ENCODE measurements at regions of chr1 and their contacts with region 1.

Region 1: DNA sequence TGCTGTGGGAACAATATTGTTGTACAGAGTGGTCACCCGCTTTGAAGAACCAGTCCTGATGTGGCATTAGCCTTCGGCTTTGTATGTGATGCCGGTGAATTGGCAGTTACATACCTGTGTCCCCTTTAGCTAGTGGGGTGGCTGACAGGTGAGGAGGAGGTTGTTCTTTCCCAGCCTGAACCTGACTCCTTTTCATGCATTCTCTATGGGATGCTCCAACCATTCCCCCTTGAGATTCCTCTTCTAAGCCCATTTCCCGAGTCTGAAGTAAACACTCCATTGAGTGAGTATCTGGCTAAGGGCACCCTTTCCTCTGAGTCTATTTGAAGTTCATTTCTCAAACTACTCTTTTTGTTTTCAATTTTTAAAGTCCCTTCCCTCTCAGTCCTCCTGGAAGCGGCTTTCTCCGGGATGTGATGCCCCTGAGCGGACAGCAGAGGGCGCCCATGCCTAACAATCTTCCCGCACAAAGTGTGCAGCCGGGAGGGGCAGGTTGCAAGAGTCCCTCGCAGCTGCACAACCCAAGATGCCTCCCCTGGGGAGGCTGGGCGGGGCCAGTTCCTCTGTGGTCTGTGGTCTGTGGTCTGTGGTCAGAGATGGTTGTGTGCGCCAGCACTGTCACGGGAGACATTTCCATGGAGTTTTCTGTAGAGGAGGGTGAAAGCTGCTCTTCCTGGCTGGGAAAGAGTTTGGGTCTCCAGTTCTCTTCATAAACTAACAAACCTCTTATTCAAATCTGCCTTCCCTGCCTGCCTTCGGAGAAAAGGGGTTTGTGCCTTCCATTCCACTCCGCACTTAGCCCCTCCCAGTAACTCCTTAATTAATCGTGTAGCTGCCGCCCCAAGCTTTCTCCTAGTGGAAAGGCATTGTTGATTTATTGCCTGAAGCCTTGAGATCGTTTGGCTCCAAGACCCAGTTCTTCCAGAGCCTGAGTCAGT is 36.4 kb upstream of the LMX1A start:
- DNase-seq: peak; percentile 78
- H3K4me3 ChIP-seq: peak overlapping the region in 1 of 2 experiments; percentile 45; a peak in 1 of 4 replicates
- H3K27ac ChIP-seq: no peak overlapping the region
- H3K4me1 ChIP-seq: peaks cover 0 to 2% of the 10 kb centered on the region in 2 experiments; a peak in 1 of 4 replicates
- H3K27me3 ChIP-seq: peaks cover 14% of the 10 kb centered on the region
- CTCF ChIP-seq: peak; percentile 97
- EP300 ChIP-seq: no peak
- RAD21 ChIP-seq: peak; percentile 82

Region 2: GRCh38 chr1:165403835-165404482 is 11.1 kb after region 1 on chr1:
- CTCF ChIA-PET with region 1: interaction called, 46 read pairs
- POLR2A ChIA-PET with region 1: no interaction called
- DNase-seq: peak; percentile 55
- H3K4me3 ChIP-seq: no peak overlapping the region; a peak in 1 of 4 replicates
- H3K27ac ChIP-seq: no peak overlapping the region
- H3K4me1 ChIP-seq: no peaks in the 10 kb centered on the region
- H3K27me3 ChIP-seq: no peaks in the 10 kb centered on the region
- CTCF ChIP-seq: peak; percentile 58
- EP300 ChIP-seq: no peak
- RAD21 ChIP-seq: peak; percentile 76

Region 3: DNA sequence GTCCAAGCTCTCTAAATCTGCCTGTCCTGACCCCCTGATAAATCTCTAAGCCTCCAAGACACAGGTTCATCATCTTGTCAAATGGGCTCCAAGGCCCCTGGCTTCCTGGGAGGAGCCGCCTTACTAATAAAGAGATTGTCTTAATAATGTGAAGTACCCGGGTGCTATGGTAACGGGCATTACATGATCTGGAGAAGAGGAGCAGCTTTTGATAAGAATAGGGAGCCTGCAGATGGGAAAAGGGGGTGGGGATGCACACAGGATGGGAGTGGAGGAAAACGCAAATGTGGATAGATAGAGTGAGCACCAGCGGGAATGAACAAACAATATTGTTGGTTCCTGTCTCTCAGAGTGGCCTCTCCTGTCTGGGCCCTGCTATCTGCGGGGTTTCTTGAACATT is 64.0 kb after region 1 on chr1:
- CTCF ChIA-PET with region 1: no interaction called
- POLR2A ChIA-PET with region 1: no interaction called
- DNase-seq: no peak
- H3K4me3 ChIP-seq: no peak overlapping the region
- H3K27ac ChIP-seq: no peak overlapping the region
- H3K4me1 ChIP-seq: no peaks in the 10 kb centered on the region
- H3K27me3 ChIP-seq: no peaks in the 10 kb centered on the region
- CTCF ChIP-seq: no peak
- EP300 ChIP-seq: no peak
- RAD21 ChIP-seq: no peak

Region 4: GRCh38 chr1:165575468-165576099 is 182.7 kb after region 1 on chr1:
- CTCF ChIA-PET with region 1: interaction called, 23 read pairs
- POLR2A ChIA-PET with region 1: no interaction called
- DNase-seq: no peak
- H3K4me3 ChIP-seq: no peak overlapping the region
- H3K27ac ChIP-seq: no peak overlapping the region
- H3K4me1 ChIP-seq: no peaks in the 10 kb centered on the region
- H3K27me3 ChIP-seq: no peaks in the 10 kb centered on the region; the same call in 1 of the 2 replicates
- CTCF ChIP-seq: no peak
- EP300 ChIP-seq: no peak
- RAD21 ChIP-seq: no peak

Region 5: GRCh38 chr1:165768513-165769394 is 375.9 kb after region 1 on chr1 and contains the start of gene TMCO1:
- CTCF ChIA-PET with region 1: no interaction called
- POLR2A ChIA-PET with region 1: no interaction called
- DNase-seq: peak; percentile 91
- H3K4me3 ChIP-seq: peak within 1 kb of the TSS; percentile 88 to 94
- H3K27ac ChIP-seq: peak within 1 kb of the TSS; percentile 86 to 95
- H3K4me1 ChIP-seq: peaks cover 9 to 17% of the 10 kb centered on the region in 2 experiments; a peak in 3 of 4 replicates
- H3K27me3 ChIP-seq: no peaks in the 10 kb centered on the region
- CTCF ChIP-seq: peak; percentile 39; the same call in 1 of the 2 replicates
- EP300 ChIP-seq: no peak; a peak in 1 of 4 replicates
- RAD21 ChIP-seq: peak; percentile 1; the same call in 1 of the 2 replicates
- polyA plus RNA-seq, gene TMCO1: 54.4 and 114 TPM in 2 replicates